CD4-positive, alpha-beta memory T cell (primary cell): ENCODE measurements at regions of chr5 and their contacts with region 1.

Region 1: DNA sequence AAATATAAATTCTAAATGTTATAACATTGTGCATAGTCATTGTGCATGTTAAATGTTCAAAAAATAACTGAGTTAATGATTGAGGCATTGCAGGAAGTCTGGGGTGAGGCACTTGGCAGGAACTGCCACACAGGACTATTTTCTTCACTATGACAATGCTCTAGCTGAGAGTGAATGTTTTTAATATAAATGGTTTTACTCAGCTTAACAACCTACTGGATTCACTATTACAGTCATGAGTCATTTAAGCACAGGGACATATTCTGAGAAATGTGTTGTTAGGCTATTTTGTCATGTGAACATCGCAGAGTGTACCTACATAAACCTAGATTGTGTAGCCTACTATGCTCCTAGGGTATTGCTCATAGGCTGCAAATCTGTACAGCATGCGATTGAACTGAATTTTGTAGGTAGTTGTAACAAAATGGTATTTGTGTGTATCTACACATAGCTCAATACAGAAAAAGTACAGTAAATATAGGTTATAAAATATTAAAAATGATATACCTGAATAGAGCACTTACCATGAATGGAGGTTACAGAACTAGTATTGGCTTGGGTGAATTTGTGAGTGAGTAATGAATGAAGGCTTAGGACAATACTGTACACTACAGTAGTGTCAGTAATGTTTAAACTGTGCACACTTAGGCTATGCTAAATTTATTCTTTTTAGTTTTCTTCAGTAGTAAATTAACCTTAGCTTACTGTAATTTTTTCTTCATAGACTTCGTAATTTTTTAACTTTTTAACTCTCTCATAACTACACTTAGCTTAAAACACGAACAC is 346.1 kb upstream of the PTGER4 start:
- DNase-seq: no peak
- H3K4me3 ChIP-seq: no peak overlapping the region
- H3K4me3 Mint-ChIP-seq: no peak overlapping the region
- H3K27ac ChIP-seq: no peak overlapping the region
- H3K27ac Mint-ChIP-seq: peak overlapping the region in 2 of 7 donors; percentile 19 to 29
- H3K4me1 ChIP-seq: peaks cover 17% of the 10 kb centered on the region
- H3K4me1 Mint-ChIP-seq: peaks cover 27 to 42% (median 31%) of the 10 kb centered on the region in 4 donors
- H3K27me3 ChIP-seq: no peaks in the 10 kb centered on the region
- H3K27me3 Mint-ChIP-seq: no peaks in the 10 kb centered on the region

Region 2: GRCh38 chr5:40046792-40047191 is 286.9 kb before region 1 on chr5:
- CTCF ChIA-PET with region 1: no interaction called
- POLR2A ChIA-PET with region 1: no interaction called
- intact Hi-C with region 1: no loop called
- DNase-seq: no peak
- H3K4me3 ChIP-seq: no peak overlapping the region
- H3K4me3 Mint-ChIP-seq: no peak overlapping the region
- H3K27ac ChIP-seq: no peak overlapping the region
- H3K27ac Mint-ChIP-seq: no peak overlapping the region
- H3K4me1 ChIP-seq: no peaks in the 10 kb centered on the region
- H3K4me1 Mint-ChIP-seq: peaks cover 0 to 2% (median 0%) of the 10 kb centered on the region in 4 donors
- H3K27me3 ChIP-seq: no peaks in the 10 kb centered on the region
- H3K27me3 Mint-ChIP-seq: peaks cover 0 to 1% of the 10 kb centered on the region in 2 donors

Region 3: DNA sequence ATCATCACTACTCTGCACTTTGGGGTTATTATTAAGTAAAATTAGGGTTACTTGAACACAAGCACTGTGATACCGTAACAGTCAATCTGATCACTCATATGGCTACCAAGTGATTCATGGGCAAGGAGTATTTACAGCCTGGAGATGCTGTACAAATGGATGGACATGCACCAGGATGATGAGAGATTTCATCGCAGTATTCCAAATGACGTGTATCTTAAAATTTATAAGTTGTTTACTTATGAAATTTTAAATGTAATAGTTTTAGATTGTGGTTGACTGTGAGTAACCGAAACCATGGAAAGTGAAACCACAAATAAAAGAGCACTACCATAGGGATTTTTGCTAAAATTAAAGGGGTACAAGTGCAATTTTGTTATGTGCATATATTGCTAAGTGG is 116.1 kb before region 1 on chr5:
- CTCF ChIA-PET with region 1: no interaction called
- POLR2A ChIA-PET with region 1: no interaction called
- intact Hi-C with region 1: loop called (anchors 10 kb)
- DNase-seq: no peak
- H3K4me3 ChIP-seq: no peak overlapping the region
- H3K4me3 Mint-ChIP-seq: peak overlapping the region in 4 of 8 donors; percentile 7 to 74 (median 46)
- H3K27ac ChIP-seq: no peak overlapping the region
- H3K27ac Mint-ChIP-seq: peak overlapping the region in 2 of 7 donors; percentile 51 to 62
- H3K4me1 ChIP-seq: peaks cover under 1% of the 10 kb centered on the region
- H3K4me1 Mint-ChIP-seq: peaks cover 10 to 23% (median 13%) of the 10 kb centered on the region in 4 donors
- H3K27me3 ChIP-seq: no peaks in the 10 kb centered on the region
- H3K27me3 Mint-ChIP-seq: no peaks in the 10 kb centered on the region